ENCODE measurements at regions of chr1 and their contacts with region 1.

Region 1: DNA sequence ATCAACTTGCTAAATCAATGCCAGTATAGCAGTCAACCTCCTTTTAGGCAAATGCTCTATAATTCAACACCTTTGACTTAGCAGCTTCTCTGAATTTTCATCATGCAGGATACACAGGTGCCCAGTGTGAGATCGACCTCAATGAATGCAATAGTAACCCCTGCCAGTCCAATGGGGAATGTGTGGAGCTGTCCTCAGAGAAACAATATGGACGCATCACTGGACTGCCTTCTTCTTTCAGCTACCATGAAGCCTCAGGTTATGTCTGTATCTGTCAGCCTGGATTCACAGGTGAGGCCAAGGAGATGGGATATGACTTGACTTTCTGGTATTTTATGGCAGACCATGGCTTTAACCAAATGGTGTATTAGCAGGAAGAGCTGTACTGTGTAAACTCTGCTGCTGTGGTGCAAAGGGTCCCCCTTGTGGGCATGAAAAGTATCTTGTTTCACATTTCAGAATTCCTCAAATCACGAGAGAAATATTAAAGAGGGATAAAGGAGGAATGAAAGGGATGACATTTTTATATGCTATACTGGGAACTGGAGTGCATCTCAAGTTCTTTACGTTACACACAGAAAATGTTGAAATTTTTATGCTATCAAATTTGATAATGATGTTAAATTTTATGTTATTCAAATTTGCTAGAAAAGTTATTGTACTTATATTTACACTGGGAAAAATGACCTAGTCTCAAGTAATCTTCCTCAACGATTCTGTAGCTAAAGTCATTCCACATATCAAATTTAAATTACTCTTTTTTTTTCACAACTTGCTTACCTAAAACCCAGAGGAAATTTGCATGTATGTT is 88.9 kb downstream of the CRB1 start:
- DNase-seq: peak; percentile 73
- H3K4me3 ChIP-seq: no peak overlapping the region
- H3K27ac ChIP-seq: no peak overlapping the region
- H3K4me1 ChIP-seq: no peaks in the 10 kb centered on the region
- H3K27me3 ChIP-seq: no peaks in the 10 kb centered on the region
- CTCF ChIP-seq: peak; percentile 80

Region 2: GRCh38 chr1:196723322-196724185 is 633.4 kb before region 1 on chr1:
- CTCF ChIA-PET with region 1: no interaction called
- POLR2A ChIA-PET with region 1: no interaction called
- intact Hi-C with region 1: loop called (anchors 1 kb)
- DNase-seq: peak; percentile 66
- H3K4me3 ChIP-seq: no peak overlapping the region
- H3K27ac ChIP-seq: no peak overlapping the region
- H3K4me1 ChIP-seq: no peaks in the 10 kb centered on the region
- H3K27me3 ChIP-seq: no peaks in the 10 kb centered on the region
- CTCF ChIP-seq: peak; percentile 92

Region 3: GRCh38 chr1:196738730-196739129 is 618.2 kb before region 1 on chr1:
- CTCF ChIA-PET with region 1: no interaction called
- POLR2A ChIA-PET with region 1: no interaction called
- intact Hi-C with region 1: loop called (anchors 2 kb)
- DNase-seq: no peak
- H3K4me3 ChIP-seq: no peak overlapping the region
- H3K27ac ChIP-seq: no peak overlapping the region
- H3K4me1 ChIP-seq: no peaks in the 10 kb centered on the region
- H3K27me3 ChIP-seq: no peaks in the 10 kb centered on the region
- CTCF ChIP-seq: no peak

Region 4: GRCh38 chr1:197096137-197096536 is 260.8 kb before region 1 on chr1:
- CTCF ChIA-PET with region 1: no interaction called
- POLR2A ChIA-PET with region 1: no interaction called
- intact Hi-C with region 1: no loop called
- DNase-seq: no peak
- H3K4me3 ChIP-seq: no peak overlapping the region
- H3K27ac ChIP-seq: no peak overlapping the region
- H3K4me1 ChIP-seq: no peaks in the 10 kb centered on the region
- H3K27me3 ChIP-seq: no peaks in the 10 kb centered on the region
- CTCF ChIP-seq: no peak

Region 5: DNA sequence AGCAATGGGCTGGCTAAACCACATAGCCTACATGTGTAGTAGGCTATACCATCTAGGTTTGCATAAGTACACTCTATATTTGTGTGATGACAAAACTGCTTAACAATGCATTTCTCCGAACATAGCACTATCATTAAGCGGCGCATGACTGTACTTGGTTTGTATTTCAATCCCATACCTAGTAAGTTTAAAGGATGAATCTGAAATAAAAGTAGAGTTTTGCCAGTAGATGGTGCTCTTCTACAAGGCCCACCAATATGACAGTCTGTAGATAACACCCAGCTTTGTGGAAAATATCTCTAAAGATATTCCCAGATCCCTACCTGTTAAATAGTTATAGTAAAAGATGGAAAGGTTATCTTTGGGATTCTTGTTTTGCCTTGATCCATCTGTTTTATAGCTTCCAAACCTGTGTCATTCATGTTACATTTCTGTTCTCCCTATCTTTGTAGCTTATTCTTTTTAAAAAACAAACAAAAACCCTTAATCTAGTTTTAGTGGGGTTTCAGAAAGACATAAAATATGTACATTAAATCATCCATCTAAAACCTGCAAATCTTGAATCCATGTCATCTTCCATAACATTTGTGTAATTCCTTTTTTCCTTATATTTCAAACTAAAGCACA is 176.6 kb before region 1 on chr1:
- CTCF ChIA-PET with region 1: interaction called, 14 read pairs
- POLR2A ChIA-PET with region 1: no interaction called
- intact Hi-C with region 1: loop called (anchors 1 kb)
- DNase-seq: peak; percentile 64
- H3K4me3 ChIP-seq: no peak overlapping the region
- H3K27ac ChIP-seq: no peak overlapping the region
- H3K4me1 ChIP-seq: no peaks in the 10 kb centered on the region
- H3K27me3 ChIP-seq: no peaks in the 10 kb centered on the region
- CTCF ChIP-seq: peak; percentile 71

Region 6: GRCh38 chr1:197224160-197224559 is 132.8 kb before region 1 on chr1:
- CTCF ChIA-PET with region 1: interaction called, 5 read pairs
- POLR2A ChIA-PET with region 1: no interaction called
- intact Hi-C with region 1: loop called (anchors 5 kb)
- DNase-seq: peak; percentile 37
- H3K4me3 ChIP-seq: no peak overlapping the region
- H3K27ac ChIP-seq: no peak overlapping the region
- H3K4me1 ChIP-seq: no peaks in the 10 kb centered on the region
- H3K27me3 ChIP-seq: no peaks in the 10 kb centered on the region
- CTCF ChIP-seq: peak; percentile 44; the same call in 1 of the 2 replicates

Region 7: GRCh38 chr1:197451431-197451830 is 94.5 kb after region 1 on chr1:
- CTCF ChIA-PET with region 1: no interaction called
- POLR2A ChIA-PET with region 1: no interaction called
- intact Hi-C with region 1: no loop called
- DNase-seq: no peak
- H3K4me3 ChIP-seq: no peak overlapping the region
- H3K27ac ChIP-seq: no peak overlapping the region
- H3K4me1 ChIP-seq: no peaks in the 10 kb centered on the region
- H3K27me3 ChIP-seq: no peaks in the 10 kb centered on the region
- CTCF ChIP-seq: no peak

Measured in A673 (cell line).